A673 (cell line): ENCODE measurements at regions of chr11 and their contacts with region 1.

Region 1: GRCh38 chr11:696955-697491 is 1.4 kb downstream of the TMEM80 start:
- DNase-seq: no peak
- H3K4me3 ChIP-seq: no peak overlapping the region
- H3K27ac ChIP-seq: no peak overlapping the region
- H3K4me1 ChIP-seq: peaks cover 16% of the 10 kb centered on the region
- H3K27me3 ChIP-seq: no peaks in the 10 kb centered on the region
- CTCF ChIP-seq: no peak

Region 2: GRCh38 chr11:362614-363465 is 334.2 kb before region 1 on chr11:
- CTCF ChIA-PET with region 1: no interaction called
- POLR2A ChIA-PET with region 1: interaction called, 11 read pairs
- intact Hi-C with region 1: no loop called
- DNase-seq: no peak
- H3K4me3 ChIP-seq: no peak overlapping the region
- H3K27ac ChIP-seq: no peak overlapping the region
- H3K4me1 ChIP-seq: peaks cover 1% of the 10 kb centered on the region
- H3K27me3 ChIP-seq: no peaks in the 10 kb centered on the region
- CTCF ChIP-seq: no peak